ENCODE measurements at regions of chr1 and their contacts with region 1.

Region 1: DNA sequence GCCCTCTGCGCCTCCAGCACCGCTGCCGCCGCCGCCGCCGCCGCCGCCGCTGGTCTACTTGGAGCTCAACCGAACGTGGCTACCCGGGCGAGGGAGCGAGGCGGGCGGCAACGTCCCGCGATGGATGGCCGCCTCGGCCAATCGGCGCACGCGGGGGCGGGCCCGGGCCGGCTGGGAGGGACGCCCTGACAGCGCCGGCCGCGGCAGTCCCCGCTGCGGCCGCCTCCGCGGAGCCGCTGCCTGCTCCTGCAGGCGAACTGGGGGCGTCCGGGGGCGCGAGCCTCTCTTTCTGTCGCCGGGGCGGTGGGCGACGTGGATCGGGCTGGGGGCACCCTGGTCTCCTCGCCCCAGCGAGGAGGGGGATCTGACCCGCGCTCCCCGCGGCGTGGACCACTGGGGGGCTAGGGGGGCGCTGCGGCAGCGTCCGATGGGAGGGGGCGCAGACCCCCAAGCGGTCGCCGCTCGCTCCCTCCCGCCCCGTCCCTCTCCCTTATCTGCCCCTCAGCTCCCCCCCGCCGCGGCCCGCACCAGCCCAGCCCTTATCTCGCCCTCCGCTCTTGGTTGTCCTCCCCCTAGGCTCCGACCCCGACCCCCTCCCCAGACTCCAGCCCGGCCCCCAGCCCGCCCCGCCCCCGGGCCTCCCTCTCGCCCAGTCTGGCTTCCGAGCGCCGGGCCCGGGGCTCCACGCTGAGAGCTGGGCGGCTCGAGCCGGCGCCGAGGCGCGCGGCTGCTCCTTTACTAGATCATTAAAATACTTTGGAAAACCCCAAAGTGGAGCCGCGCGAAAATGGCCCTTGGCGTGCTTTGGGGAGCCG is at the start of gene SSBP3:
- DNase-seq: no peak
- ATAC-seq: peak; percentile 96
- H3K4me3 ChIP-seq: peak within 1 kb of the TSS; percentile 57 to 78
- H3K27ac ChIP-seq: peak within 1 kb of the TSS; percentile 77
- H3K4me1 ChIP-seq: peaks cover 19% of the 10 kb centered on the region
- H3K27me3 ChIP-seq: no peaks in the 10 kb centered on the region
- CTCF ChIP-seq: no peak
- total RNA-seq, gene SSBP3: 22.5 TPM

Region 2: DNA sequence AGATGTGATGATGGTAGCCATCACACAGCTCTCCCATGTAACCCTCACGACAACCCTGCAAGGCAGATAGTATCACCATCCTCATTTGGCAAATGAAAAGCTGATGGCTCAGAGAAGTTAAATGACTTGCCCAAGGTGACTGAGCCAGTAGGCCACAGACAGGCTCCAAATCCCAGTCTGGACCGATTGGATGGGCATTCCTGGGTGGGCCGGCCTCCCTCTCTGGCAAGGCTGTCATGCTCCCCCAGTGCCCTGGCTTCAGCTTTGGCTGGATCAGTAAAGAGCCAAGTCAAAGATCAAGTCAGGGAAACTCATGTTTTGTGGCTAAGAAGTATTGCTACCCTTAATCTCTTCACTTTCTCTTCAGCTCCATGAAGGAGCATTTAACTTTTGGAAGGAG is 294.9 kb before region 1 on chr1:
- CTCF ChIA-PET with region 1: no interaction called
- POLR2A ChIA-PET with region 1: interaction called, 13 read pairs
- in situ Hi-C with region 1: no loop called
- intact Hi-C with region 1: no loop called
- DNase-seq: no peak
- ATAC-seq: no peak
- H3K4me3 ChIP-seq: no peak overlapping the region
- H3K27ac ChIP-seq: no peak overlapping the region
- H3K4me1 ChIP-seq: no peaks in the 10 kb centered on the region; the same call in 1 of the 2 replicates
- H3K27me3 ChIP-seq: no peaks in the 10 kb centered on the region
- CTCF ChIP-seq: no peak

Region 3: GRCh38 chr1:54528613-54529012 is 122.1 kb after region 1 on chr1:
- CTCF ChIA-PET with region 1: no interaction called
- POLR2A ChIA-PET with region 1: no interaction called
- in situ Hi-C with region 1: no loop called
- intact Hi-C with region 1: no loop called
- DNase-seq: no peak
- ATAC-seq: no peak
- H3K4me3 ChIP-seq: no peak overlapping the region
- H3K27ac ChIP-seq: no peak overlapping the region
- H3K4me1 ChIP-seq: no peaks in the 10 kb centered on the region
- H3K27me3 ChIP-seq: no peaks in the 10 kb centered on the region
- CTCF ChIP-seq: no peak